ENCODE measurements at regions of chr7 and their contacts with region 1.

Region 1: DNA sequence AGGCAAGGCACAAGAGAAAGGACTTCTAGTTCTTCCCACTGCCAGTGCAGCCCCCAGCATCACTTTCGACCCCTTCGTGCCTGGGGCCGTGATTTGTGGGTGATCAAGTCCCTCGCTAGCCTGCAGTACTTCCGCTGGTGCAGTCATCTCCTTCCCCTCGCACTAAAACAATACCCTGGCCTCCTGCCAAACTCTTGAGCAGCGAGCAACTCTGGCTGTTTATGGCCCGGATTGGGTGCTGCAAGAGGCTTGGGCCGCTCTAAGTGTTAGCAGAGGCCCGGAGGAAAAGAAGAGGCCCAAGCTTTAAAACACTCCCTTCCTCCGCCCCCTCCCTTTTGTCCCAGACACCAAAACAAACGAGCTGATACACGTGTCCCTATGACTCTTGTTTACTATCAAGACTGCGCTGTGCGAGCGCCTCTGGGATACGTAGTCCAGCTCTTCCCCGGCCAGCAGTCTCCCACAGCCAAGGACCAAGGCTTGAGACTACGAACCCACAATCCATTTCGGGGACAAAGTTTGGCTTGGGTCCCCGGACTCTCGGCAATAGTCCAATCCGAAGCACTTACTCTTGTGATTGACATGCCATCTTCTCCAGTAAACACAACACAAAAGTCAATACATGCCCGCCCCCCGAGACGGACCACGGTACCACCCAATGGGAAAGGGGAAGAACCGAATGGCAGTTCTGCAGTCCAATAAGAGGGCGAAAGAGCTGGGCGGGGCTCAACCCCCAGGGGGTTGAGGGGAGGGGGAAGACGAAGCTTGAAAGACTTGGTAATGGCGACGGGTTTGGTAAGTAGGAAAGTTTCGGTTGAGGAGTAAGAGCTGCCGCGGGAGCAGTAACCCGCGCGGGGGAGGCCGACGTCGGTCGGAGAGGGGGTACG is at the start of gene HBP1:
- DNase-seq: peak; percentile 98
- ATAC-seq: peak; percentile 82
- H3K4me3 Mint-ChIP-seq: peak within 1 kb of the TSS; percentile 91
- H3K27ac Mint-ChIP-seq: peak within 1 kb of the TSS; percentile 100
- H3K4me1 Mint-ChIP-seq: peaks cover 32% of the 10 kb centered on the region
- H3K27me3 Mint-ChIP-seq: no peaks in the 10 kb centered on the region
- total RNA-seq, gene HBP1: 17.8 to 25.4 TPM

Region 2: DNA sequence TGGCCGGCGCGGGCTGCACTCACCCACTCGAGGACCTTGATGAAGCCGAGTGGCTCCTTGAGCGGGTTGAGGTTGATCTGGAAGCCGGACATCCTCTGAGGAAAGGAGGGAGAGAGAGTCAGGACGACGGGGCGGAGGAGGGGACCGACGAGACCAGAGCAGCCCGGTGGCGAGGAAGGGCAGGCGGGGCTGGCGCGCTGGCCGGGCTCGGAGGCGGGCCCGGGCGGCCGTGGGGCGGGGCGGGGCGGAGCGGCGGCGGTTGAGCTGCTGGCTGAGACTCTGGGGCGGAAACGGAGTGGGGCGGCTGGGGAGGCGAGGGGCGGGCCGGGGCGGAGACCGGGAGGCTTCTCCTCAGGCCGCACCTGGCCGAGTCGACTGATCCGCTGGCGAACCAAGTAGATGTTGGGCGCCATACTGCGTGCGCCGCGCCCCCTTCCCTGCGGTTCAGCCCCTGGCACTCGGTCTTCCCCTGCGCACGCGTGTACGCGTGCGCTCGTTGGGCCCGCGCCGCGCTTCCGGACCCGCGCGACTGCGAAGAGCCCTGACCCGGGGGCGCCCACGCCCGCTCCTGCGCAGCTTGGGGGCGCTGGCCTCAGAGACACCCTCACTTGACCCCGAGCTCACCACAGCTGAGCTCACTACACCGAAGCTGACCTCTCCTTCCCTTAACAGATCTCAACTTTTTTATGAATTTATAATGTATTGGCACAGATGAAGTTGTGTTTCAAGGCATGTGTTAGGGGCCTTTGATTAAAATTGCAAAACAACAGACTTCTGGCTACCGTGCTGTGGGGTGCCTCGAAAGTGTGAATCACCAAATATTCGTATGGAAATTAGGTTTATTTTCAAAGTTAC is 1056.1 kb before region 1 on chr7 and contains the start of gene SYPL1:
- CTCF ChIA-PET with region 1: no interaction called
- POLR2A ChIA-PET with region 1: no interaction called
- intact Hi-C with region 1: loop called (anchors 1 to 5 kb)
- DNase-seq: peak; percentile 95
- ATAC-seq: peak; percentile 86
- H3K4me3 Mint-ChIP-seq: peak within 1 kb of the TSS; percentile 79
- H3K27ac Mint-ChIP-seq: peak within 1 kb of the TSS; percentile 89
- H3K4me1 Mint-ChIP-seq: peaks cover 64% of the 10 kb centered on the region
- H3K27me3 Mint-ChIP-seq: no peaks in the 10 kb centered on the region
- total RNA-seq, gene SYPL1: 23.7 to 28.8 TPM

Region 3: DNA sequence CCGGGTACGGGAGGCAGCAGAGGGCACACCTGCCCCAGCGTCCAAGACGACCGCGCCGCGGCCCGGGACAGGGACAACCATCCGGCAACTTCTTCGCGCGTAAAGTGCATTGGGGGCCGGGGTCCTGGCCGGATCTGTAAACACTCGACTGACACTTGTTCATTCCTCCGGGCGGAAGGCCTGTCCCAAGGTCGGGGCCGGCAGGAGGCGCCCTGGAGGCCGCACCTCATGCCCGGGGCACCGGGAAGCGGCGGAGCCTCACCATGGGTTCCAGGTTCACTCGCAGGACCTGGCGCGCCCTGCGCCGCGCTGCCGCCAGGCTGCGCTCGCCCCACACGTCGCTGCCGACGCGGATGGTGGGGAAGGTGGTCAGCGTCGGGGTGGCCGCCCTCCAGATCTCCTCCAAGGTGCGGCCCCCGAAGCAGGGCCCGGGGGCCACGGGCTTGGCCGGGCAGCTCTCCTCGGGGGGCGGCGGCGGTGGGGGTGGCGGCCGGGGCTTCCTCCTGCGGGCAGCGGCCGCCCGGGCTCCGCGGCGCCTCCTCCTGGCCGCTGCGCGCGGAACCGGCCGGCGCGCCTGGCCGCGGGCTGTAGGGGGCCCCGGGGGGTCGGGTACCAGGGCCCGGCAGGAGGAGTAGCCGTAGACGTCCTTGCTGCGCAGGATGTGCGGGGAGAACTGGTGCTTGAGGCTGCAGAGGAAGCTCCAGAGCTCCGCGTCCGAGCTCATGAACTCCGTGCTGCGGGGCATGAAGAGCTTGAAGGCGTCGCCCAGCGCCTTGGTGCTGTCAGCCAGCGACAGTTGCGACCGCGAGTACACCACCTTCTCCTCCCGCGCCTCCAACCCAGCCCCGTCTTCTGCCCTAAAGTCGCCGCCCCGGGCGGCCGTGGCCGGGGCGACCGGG is 508.3 kb before region 1 on chr7:
- CTCF ChIA-PET with region 1: no interaction called
- POLR2A ChIA-PET with region 1: no interaction called
- intact Hi-C with region 1: loop called (anchors 1 to 5 kb)
- DNase-seq: peak; percentile 92
- ATAC-seq: peak; percentile 72
- H3K4me3 Mint-ChIP-seq: peak overlapping the region; percentile 86
- H3K27ac Mint-ChIP-seq: peak overlapping the region; percentile 94
- H3K4me1 Mint-ChIP-seq: peaks cover 31% of the 10 kb centered on the region
- H3K27me3 Mint-ChIP-seq: no peaks in the 10 kb centered on the region

Region 4: DNA sequence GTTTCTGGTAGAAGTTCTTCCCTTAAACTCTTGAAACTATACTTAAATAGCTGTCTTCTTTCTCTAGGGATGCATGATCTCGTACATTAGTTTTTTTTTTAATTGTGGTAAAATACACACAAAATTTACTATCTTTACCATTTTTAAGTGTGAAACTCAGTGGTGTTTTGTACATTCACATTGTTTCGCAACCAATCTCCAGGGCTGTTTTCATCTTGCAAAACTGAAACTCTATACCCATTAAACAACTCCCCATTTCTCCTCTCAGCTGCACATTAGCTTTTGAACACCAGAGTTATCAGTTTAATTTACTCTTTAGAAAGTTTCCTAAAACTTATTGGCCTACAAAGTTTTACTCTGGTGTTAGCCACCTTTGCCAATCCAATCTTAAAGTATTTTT is 169.5 kb before region 1 on chr7:
- CTCF ChIA-PET with region 1: no interaction called
- POLR2A ChIA-PET with region 1: no interaction called
- intact Hi-C with region 1: no loop called
- DNase-seq: no peak
- ATAC-seq: no peak
- H3K4me3 Mint-ChIP-seq: no peak overlapping the region
- H3K27ac Mint-ChIP-seq: no peak overlapping the region
- H3K4me1 Mint-ChIP-seq: no peaks in the 10 kb centered on the region
- H3K27me3 Mint-ChIP-seq: peaks cover 5% of the 10 kb centered on the region

Region 5: GRCh38 chr7:107130487-107131225 is 37.8 kb before region 1 on chr7:
- CTCF ChIA-PET with region 1: no interaction called
- POLR2A ChIA-PET with region 1: no interaction called
- intact Hi-C with region 1: no loop called
- DNase-seq: no peak
- ATAC-seq: no peak
- H3K4me3 Mint-ChIP-seq: no peak overlapping the region
- H3K27ac Mint-ChIP-seq: no peak overlapping the region
- H3K4me1 Mint-ChIP-seq: peaks cover 13% of the 10 kb centered on the region
- H3K27me3 Mint-ChIP-seq: peaks cover 3% of the 10 kb centered on the region

Region 6: DNA sequence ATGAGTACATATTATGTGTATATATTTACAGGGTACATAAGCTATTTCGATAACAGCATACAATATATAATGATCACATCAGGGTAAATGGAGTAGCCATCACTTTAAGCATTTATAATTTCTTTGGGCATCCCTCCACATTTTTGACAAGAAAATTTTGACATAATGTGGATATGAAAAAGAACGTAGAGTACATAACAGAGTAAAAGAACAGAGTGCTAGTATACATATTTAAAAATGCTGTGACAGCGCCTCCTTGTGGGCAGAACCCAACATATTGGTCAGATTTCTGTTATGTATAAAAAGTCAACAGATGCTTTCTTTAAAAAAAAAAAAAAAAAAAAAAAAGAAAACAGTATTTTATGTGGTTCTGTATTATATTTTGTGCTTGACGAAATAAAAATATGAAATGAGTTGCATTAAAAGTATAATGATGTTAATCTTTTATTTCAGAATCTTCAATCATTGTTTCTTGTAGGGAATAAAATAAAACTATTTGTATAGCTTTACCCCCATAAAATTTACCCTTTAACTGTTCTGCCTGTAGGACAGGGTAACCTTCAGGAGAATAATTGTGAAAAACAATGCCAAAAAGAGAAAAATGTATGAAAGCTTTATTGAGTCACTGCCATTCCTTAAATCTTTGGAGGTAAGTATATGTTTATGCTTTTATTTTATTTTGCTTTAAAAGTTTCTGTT is 18.0 kb before region 1 on chr7:
- CTCF ChIA-PET with region 1: interaction called, 41 read pairs
- POLR2A ChIA-PET with region 1: no interaction called
- intact Hi-C with region 1: no loop called
- DNase-seq: peak; percentile 86
- ATAC-seq: peak; percentile 83
- H3K4me3 Mint-ChIP-seq: no peak overlapping the region
- H3K27ac Mint-ChIP-seq: no peak overlapping the region
- H3K4me1 Mint-ChIP-seq: peaks cover 4% of the 10 kb centered on the region
- H3K27me3 Mint-ChIP-seq: no peaks in the 10 kb centered on the region

Region 7: DNA sequence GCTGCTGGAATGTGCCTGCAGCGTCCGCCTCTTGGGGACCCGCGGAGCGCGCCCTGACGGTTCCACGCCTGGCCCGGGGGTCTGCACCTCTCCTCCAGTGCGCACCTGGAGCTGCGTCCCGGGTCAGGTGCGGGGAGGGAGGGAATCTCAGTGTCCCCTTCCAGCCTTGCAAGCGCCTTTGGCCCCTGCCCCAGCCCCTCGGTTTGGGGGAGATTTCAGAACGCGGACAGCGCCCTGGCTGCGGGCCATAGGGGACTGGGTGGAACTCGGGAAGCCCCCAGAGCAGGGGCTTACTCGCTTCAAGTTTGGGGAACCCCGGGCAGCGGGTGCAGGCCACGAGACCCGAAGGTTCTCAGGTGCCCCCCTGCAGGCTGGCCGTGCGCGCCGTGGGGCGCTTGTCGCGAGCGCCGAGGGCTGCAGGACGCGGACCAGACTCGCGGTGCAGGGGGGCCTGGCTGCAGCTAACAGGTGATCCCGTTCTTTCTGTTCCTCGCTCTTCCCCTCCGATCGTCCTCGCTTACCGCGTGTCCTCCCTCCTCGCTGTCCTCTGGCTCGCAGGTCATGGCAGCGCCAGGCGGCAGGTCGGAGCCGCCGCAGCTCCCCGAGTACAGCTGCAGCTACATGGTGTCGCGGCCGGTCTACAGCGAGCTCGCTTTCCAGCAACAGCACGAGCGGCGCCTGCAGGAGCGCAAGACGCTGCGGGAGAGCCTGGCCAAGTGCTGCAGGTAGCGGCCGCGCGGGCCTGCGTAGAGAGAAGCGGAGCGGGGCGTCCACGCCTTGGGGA is 492.8 kb after region 1 on chr7:
- CTCF ChIA-PET with region 1: no interaction called
- POLR2A ChIA-PET with region 1: interaction called, 4 read pairs
- intact Hi-C with region 1: loop called (anchors 2 to 5 kb)
- DNase-seq: peak; percentile 77
- ATAC-seq: peak; percentile 43
- H3K4me3 Mint-ChIP-seq: peak overlapping the region; percentile 78
- H3K27ac Mint-ChIP-seq: peak overlapping the region; percentile 82
- H3K4me1 Mint-ChIP-seq: peaks cover 31% of the 10 kb centered on the region
- H3K27me3 Mint-ChIP-seq: peaks cover 21% of the 10 kb centered on the region

Region 8: DNA sequence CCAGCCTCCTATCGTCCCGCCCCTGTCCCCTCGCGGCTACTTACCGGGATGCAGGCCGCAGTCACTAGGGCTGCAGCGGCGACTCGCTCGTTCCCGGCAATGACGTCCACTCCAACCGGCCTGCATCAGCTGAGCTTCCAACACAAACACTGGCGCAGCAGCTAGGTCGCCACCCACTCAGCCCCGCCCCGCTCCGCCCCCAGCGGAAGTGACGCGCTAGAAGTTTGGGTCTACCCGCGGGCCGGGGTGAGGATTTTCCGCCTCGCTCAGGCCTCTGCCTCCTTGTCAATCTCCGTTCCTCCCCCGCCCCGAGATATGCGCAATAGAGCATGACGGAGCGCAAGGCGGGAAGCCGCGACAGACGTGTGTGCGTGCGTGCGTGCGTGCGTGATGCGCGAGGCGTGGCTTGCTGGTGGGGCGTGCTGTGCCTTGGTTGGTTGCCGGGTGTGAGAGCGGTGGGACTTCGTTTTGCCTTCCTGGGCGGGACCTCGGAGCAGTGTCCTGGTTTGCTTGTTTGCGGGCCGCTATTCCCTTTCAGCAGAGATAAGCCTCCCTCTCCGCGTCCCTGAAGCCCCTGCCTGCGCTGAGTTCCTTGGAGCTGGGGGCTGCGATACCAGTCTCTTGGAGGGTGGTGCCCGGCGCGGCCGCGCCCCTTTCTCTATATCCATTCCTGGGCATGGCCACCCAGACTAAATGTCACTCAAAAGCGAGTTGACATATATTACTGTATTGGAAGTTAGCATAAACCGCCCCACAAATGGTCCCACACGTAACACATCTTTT is 1357.7 kb after region 1 on chr7 and contains the start of gene PNPLA8:
- CTCF ChIA-PET with region 1: no interaction called
- POLR2A ChIA-PET with region 1: no interaction called
- intact Hi-C with region 1: loop called in 1 of 2 experiments (anchors 2 kb)
- DNase-seq: peak; percentile 100
- ATAC-seq: peak; percentile 92
- H3K4me3 Mint-ChIP-seq: peak within 1 kb of the TSS; percentile 91
- H3K27ac Mint-ChIP-seq: peak within 1 kb of the TSS; percentile 96
- H3K4me1 Mint-ChIP-seq: peaks cover 37% of the 10 kb centered on the region
- H3K27me3 Mint-ChIP-seq: peaks cover 2% of the 10 kb centered on the region
- total RNA-seq, gene PNPLA8: 14.2 to 18.4 TPM